ENCODE measurements at regions of chr12 and their contacts with region 1.

Region 1: DNA sequence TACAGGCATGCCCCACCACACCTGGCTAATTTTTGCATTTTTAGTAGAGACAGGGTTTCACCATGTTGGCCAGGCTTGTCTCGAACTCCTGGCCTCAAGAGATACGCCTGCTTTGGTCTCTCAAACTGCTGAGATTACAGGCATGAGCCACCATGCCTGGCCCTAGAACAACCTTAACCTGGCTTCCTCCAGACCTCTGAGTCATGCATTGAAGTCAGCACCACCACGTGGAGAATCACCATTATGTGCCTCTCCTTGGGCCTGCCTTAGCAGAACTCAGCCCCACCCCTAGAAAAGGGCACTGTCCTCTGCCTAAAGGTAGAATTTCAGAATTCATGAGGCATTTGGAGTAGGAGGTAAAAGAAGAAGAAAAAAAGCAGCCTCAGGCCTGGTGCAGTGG is 49.0 kb downstream of the LIMA1 start:
- DNase-seq: no peak
- ATAC-seq: peak in 1 of 4 experiments; percentile 35
- H3K4me3 ChIP-seq: no peak overlapping the region
- H3K4me3 Mint-ChIP-seq: no peak overlapping the region
- H3K27ac ChIP-seq: no peak overlapping the region
- H3K27ac Mint-ChIP-seq: no peak overlapping the region
- H3K4me1 ChIP-seq: no peaks in the 10 kb centered on the region
- H3K4me1 Mint-ChIP-seq: no peaks in the 10 kb centered on the region
- H3K27me3 ChIP-seq: no peaks in the 10 kb centered on the region
- H3K27me3 Mint-ChIP-seq: no peaks in the 10 kb centered on the region

Region 2: GRCh38 chr12:49707128-49707811 is 527.1 kb before region 1 on chr12 and contains the start of gene FMNL3:
- CTCF ChIA-PET with region 1: no interaction called
- POLR2A ChIA-PET with region 1: no interaction called
- DNase-seq: peak; percentile 96 to 100 (median 98)
- ATAC-seq: peak; percentile 95 to 97 (median 96)
- H3K4me3 ChIP-seq: peak within 1 kb of the TSS; percentile 72 to 81
- H3K4me3 Mint-ChIP-seq: peak within 1 kb of the TSS; percentile 91 to 93 (median 92)
- H3K27ac ChIP-seq: peak within 1 kb of the TSS; percentile 67
- H3K27ac Mint-ChIP-seq: peak within 1 kb of the TSS; percentile 85 to 86
- H3K4me1 ChIP-seq: peaks cover 25 to 43% of the 10 kb centered on the region in 2 experiments
- H3K4me1 Mint-ChIP-seq: peaks cover 43 to 49% (median 48%) of the 10 kb centered on the region in 3 donors
- H3K27me3 ChIP-seq: peaks cover 0 to 7% of the 10 kb centered on the region in 2 experiments
- H3K27me3 Mint-ChIP-seq: peaks cover 4 to 8% of the 10 kb centered on the region in 2 donors
- total RNA-seq, gene FMNL3: 34.2 to 45.5 (median 41.1) TPM

Region 3: GRCh38 chr12:50222275-50222795 is 12.0 kb before region 1 on chr12:
- CTCF ChIA-PET with region 1: no interaction called
- POLR2A ChIA-PET with region 1: no interaction called
- DNase-seq: peak in 7 of 35 experiments; percentile 3 to 62 (median 15)
- ATAC-seq: peak; percentile 32 to 60 (median 42)
- H3K4me3 ChIP-seq: peak overlapping the region; percentile 70 to 73
- H3K4me3 Mint-ChIP-seq: no peak overlapping the region
- H3K27ac ChIP-seq: peak overlapping the region; percentile 80
- H3K27ac Mint-ChIP-seq: no peak overlapping the region
- H3K4me1 ChIP-seq: peaks cover 14 to 35% of the 10 kb centered on the region in 2 experiments
- H3K4me1 Mint-ChIP-seq: peaks cover 32 to 40% (median 33%) of the 10 kb centered on the region in 3 donors
- H3K27me3 ChIP-seq: no peaks in the 10 kb centered on the region
- H3K27me3 Mint-ChIP-seq: no peaks in the 10 kb centered on the region

Region 4: GRCh38 chr12:50302686-50303085 is 68.3 kb after region 1 on chr12:
- CTCF ChIA-PET with region 1: no interaction called
- POLR2A ChIA-PET with region 1: interaction called in 1 of 2 experiments, 12 read pairs
- DNase-seq: no peak
- ATAC-seq: no peak
- H3K4me3 ChIP-seq: no peak overlapping the region
- H3K4me3 Mint-ChIP-seq: no peak overlapping the region
- H3K27ac ChIP-seq: no peak overlapping the region
- H3K27ac Mint-ChIP-seq: no peak overlapping the region
- H3K4me1 ChIP-seq: no peaks in the 10 kb centered on the region
- H3K4me1 Mint-ChIP-seq: peaks cover 0 to 3% (median 0%) of the 10 kb centered on the region in 3 donors
- H3K27me3 ChIP-seq: no peaks in the 10 kb centered on the region
- H3K27me3 Mint-ChIP-seq: no peaks in the 10 kb centered on the region